ENCODE measurements at regions of chr3 and their contacts with region 1.

Region 1: DNA sequence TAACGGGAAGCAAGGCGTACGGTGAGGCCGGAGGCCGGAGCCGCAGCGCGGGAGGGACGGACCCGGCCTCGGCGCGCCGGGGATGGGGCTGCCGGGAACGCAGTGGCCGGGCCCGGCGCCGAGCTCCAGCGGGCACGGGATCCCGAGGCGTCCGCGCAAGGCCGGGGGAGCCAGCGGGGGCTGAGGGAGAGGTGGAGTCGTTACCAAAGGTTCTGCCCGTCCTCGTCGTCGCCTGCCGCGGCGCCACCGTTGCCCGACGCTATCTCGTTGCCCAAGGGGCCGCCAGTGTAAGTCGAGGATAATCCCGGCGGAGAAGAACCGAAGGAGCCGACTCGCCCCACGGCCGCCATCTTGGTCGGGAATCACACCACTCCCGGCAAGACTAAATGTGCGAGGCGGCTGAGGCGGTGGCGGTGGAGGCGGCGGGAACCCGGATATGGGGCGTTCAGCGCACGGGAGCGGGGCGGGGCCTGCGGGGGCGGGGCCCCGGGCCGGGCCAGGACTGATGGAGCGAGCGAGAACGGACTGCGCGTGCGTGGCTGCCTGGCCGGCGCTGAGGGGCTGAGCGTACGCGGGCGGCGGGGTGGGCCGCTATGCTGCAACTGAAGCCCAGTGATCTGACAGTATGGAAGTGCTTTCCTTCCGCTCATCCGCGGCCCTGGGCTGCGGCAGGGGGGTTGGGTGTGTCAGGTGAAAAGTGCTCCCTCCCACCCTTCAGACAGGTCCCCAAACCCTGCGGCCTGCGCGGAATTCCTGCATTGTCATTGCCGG is at the start of gene DYNC1LI1:
- DNase-seq: peak; percentile 96
- ATAC-seq: peak; percentile 95
- H3K4me3 Mint-ChIP-seq: peak within 1 kb of the TSS; percentile 94
- H3K27ac Mint-ChIP-seq: peak within 1 kb of the TSS; percentile 93
- H3K4me1 Mint-ChIP-seq: peaks cover 32% of the 10 kb centered on the region
- H3K27me3 Mint-ChIP-seq: no peaks in the 10 kb centered on the region
- CTCF ChIP-seq: no peak
- total RNA-seq, gene DYNC1LI1: 32.6 and 38.8 TPM in 2 replicates

Region 2: DNA sequence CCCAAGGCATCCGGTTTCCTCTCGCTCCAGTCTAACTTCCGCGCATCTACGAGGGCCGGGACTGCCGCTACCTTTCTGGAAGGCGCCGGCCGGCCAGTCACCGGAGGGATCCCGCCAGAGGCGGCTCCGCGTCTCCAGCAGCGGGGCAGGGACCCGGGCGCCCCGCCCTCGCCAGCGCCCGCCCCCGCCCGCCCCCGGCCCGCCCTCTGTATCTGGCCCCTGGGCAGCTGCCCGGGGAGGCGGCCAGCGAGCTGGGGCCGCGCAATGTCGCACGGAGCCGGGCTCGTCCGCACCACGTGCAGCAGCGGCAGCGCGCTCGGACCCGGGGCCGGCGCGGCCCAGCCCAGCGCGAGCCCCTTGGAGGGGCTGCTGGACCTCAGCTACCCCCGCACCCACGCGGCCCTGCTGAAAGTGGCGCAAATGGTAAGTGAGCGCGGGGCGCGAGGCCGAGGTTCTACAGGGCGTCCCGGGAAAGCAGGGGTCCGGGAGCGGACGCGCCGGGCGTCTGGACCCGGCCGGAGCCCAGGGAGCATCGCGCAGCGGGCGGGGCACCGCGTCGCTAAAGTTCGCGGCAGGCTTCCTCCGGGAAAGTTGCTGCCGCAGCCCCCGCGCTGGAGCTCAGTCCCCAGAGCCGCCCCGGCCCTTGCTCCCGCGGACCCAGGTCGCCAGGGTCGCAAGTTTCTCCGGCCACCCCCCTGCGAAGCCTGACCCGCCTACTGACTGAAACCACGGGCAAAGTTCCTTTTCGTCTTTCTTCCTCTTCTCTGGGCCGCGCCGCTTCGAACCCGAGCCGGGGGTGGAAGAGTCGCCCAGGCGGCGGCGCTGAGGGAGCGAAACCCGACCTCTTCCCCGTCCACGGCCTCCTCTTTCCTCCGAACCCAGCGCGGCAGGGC is 178.7 kb before region 1 on chr3 and contains the start of gene CMTM7:
- CTCF ChIA-PET with region 1: no interaction called
- POLR2A ChIA-PET with region 1: no interaction called
- intact Hi-C with region 1: loop called (anchors 2 kb)
- DNase-seq: peak; percentile 65
- ATAC-seq: peak; percentile 64
- H3K4me3 Mint-ChIP-seq: peak within 1 kb of the TSS; percentile 97
- H3K27ac Mint-ChIP-seq: peak within 1 kb of the TSS; percentile 90
- H3K4me1 Mint-ChIP-seq: peaks cover 56% of the 10 kb centered on the region
- H3K27me3 Mint-ChIP-seq: no peaks in the 10 kb centered on the region
- CTCF ChIP-seq: no peak
- total RNA-seq, gene CMTM7: 70.5 and 82.1 TPM in 2 replicates

Measured in activated B cell treated with CpG ODN at 0.5 μM for 24 hours (primary cell).